ENCODE measurements at regions of chr10 and their contacts with region 1.

Region 1: DNA sequence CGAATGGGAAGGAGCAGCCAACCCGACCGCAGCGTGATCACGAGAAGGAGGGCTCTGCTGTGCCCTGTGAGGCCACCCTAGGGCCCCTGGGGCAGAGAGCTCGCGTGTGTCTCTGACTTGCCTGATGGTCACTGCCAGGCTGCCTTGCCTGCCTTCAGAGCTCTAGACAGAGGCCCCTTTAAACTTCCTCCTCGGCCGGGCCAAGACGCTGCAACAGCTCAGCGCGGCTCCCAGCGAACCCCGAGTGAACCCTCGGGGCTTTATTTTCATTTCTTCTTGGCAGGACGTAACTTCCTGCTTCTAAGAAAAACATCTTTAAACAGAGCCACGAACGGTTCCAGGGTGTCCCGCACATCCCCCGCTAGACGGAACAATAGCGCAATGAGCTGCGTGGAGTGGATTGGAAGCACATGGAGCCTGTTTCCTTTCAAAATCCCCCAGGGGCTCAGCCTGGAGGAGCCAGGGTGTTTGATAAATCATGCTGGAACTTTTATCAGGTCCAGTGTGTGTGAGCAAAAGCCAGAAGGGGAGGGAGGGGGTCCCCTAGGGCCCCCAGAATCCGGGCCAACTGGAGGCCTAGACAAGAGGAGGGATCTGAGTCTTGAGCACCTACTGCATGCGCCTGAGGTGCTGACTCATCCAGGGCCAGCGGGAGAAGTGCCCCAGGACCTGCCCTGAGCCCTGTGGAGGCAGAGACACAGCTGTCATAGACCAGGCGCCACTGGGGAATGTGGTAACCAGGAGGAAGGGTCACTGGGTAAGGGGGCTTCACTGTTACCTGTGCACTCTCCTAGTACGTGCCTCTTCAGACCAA is 134.1 kb upstream of the GDF10 start:
- DNase-seq: peak; percentile 41 to 80 (median 68)
- ATAC-seq: peak; percentile 82
- H3K4me3 ChIP-seq: peak overlapping the region; percentile 71
- H3K4me3 Mint-ChIP-seq: peak overlapping the region; percentile 79 to 93 (median 92)
- H3K27ac ChIP-seq: peak overlapping the region; percentile 77
- H3K27ac Mint-ChIP-seq: peak overlapping the region; percentile 84 to 100 (median 99)
- H3K4me1 ChIP-seq: peaks cover 12 to 23% of the 10 kb centered on the region in 2 donors
- H3K4me1 Mint-ChIP-seq: peaks cover 19 to 43% (median 28%) of the 10 kb centered on the region in 7 donors
- H3K27me3 ChIP-seq: no peaks in the 10 kb centered on the region
- H3K27me3 Mint-ChIP-seq: peaks cover 0 to 9% (median 0%) of the 10 kb centered on the region in 5 donors

Region 2: DNA sequence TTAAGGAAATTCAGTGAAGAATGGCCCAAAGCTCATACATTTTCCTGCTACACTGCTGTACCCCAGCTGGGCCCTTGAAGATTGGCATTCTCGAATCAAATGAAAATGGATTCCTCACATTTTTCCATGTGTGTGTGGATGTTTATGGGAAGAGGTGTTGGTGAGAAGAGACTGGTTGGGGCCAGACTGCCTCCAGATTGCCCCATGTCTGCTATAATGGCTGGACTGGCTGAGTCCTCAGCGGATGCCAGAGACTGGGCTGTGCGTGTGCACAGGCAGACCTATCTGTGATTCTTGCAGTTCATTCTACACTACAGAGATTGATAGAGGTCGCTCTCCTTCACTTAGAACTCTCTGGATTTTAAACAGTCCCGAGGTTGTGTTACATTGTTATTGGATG is 49.5 kb before region 1 on chr10:
- CTCF ChIA-PET with region 1: no interaction called
- POLR2A ChIA-PET with region 1: no interaction called
- intact Hi-C with region 1: no loop called
- DNase-seq: no peak
- ATAC-seq: no peak
- H3K4me3 ChIP-seq: no peak overlapping the region
- H3K4me3 Mint-ChIP-seq: no peak overlapping the region
- H3K27ac ChIP-seq: no peak overlapping the region
- H3K27ac Mint-ChIP-seq: peak overlapping the region in 1 of 9 donors; percentile 12
- H3K4me1 ChIP-seq: no peaks in the 10 kb centered on the region
- H3K4me1 Mint-ChIP-seq: peaks cover 0 to 4% (median under 1%) of the 10 kb centered on the region in 7 donors
- H3K27me3 ChIP-seq: no peaks in the 10 kb centered on the region
- H3K27me3 Mint-ChIP-seq: peaks cover 0 to 18% (median 0%) of the 10 kb centered on the region in 5 donors

Region 3: GRCh38 chr10:47300429-47300931 is 134.6 kb after region 1 on chr10:
- CTCF ChIA-PET with region 1: no interaction called
- POLR2A ChIA-PET with region 1: interaction called, 3 read pairs
- intact Hi-C with region 1: loop called in 1 of 2 experiments (anchors 1 kb)
- DNase-seq: no peak
- ATAC-seq: peak; percentile 38
- H3K4me3 ChIP-seq: peak overlapping the region; percentile 39
- H3K4me3 Mint-ChIP-seq: peak overlapping the region; percentile 52 to 90 (median 86)
- H3K27ac ChIP-seq: no peak overlapping the region
- H3K27ac Mint-ChIP-seq: peak overlapping the region in 3 of 9 donors; percentile 32 to 74 (median 71)
- H3K4me1 ChIP-seq: peaks cover 0 to 13% of the 10 kb centered on the region in 2 donors
- H3K4me1 Mint-ChIP-seq: peaks cover 6 to 47% (median 27%) of the 10 kb centered on the region in 7 donors
- H3K27me3 ChIP-seq: no peaks in the 10 kb centered on the region
- H3K27me3 Mint-ChIP-seq: peaks cover 0 to 60% (median 5%) of the 10 kb centered on the region in 5 donors

Measured in naive thymus-derived CD4-positive, alpha-beta T cell (primary cell).